Mammary epithelial cell (primary cell): ENCODE measurements at regions of chr16 and their contacts with region 1.

Region 1: DNA sequence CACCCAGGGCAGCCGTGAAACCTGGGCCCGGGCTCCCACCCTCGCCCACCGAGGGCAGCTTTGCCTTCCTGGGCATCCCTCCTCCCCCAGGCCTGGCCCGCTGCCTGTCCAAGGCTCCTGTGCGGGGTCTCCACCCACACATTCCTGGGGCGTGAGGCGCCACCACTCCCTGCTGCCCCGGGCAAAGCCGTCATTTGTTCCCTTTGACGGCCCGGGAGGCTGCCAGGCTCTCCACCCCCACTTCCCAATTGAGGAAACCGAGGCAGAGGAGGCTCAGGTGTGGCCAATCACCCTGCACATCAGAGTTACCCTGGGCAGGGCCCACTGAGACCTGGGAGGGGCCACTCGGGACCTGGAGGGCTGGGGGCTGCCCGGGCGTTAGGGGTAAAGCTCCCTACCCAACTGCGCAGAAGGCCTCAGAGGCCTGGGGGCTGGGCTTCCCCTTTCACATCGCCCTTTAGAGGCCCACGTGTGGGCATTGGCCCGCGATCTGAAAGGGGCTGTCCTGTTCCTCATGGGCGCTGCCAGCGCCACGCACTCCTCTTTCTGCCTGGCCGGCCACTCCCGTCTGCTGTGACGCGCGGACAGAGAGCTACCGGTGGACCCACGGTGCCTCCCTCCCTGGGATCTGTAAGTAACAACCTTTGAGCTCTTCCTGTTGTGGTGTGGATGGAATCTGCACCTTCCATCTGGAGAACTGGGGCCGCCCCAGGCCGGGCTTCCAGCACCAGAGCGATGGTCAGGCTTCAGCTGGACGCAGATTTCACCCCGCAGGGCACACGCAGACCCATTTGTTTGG is at the start of gene MSLN:
- DNase-seq: peak; percentile 47
- H3K4me3 ChIP-seq: no peak within 1 kb of the TSS
- H3K27ac ChIP-seq: peak within 1 kb of the TSS; percentile 13
- H3K4me1 ChIP-seq: peaks cover 22% of the 10 kb centered on the region
- H3K27me3 ChIP-seq: no peaks in the 10 kb centered on the region
- CTCF ChIP-seq: no peak
- total RNA-seq, gene MSLN: 1.4 to 17.8 TPM

Region 2: GRCh38 chr16:621528-622105 is 139.1 kb before region 1 on chr16:
- CTCF ChIA-PET with region 1: no interaction called
- dilution Hi-C with region 1: no loop called
- in situ Hi-C with region 1: no loop called
- intact Hi-C with region 1: no loop called
- DNase-seq: no peak
- H3K4me3 ChIP-seq: no peak overlapping the region
- H3K27ac ChIP-seq: no peak overlapping the region
- H3K4me1 ChIP-seq: peaks cover 26% of the 10 kb centered on the region
- H3K27me3 ChIP-seq: no peaks in the 10 kb centered on the region
- CTCF ChIP-seq: no peak

Region 3: DNA sequence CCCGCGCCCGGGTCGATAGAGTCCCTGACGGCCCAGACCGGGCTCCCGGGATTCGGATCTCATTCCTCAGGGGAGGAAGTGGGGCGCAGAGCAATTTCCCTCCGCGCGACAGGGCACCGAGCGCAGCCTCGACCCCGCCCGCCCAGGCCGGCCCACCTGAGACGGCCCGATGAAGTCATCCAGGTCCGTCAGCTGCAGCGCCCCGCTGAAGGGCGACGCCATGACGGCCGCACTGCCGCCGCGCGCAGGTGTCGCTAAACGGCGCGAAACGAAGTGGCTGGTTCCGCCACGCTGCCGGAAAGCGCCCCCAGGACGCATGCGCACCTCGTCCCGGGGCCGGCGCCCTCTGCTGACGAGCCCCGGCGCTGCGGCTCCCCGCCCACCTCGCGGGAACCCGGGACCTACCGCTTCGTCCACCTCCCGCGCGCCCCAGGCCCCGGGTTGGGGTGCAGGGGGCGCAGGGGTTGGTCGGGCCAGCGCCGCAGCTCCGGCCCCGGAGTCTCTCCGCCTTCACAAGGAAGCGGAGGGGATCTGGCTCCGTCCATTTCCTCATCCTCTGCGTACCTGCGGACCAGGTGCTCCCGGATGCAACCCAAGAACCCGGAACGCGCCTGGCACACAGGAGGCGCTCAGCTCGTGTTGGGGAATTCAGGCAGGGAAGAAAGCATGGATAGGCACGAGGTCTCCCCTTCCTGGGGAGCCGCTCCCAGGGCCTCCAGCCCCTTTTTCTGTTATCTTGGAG is 19.8 kb before region 1 on chr16 and contains the start of gene CIAO3:
- CTCF ChIA-PET with region 1: no interaction called
- dilution Hi-C with region 1: no loop called
- in situ Hi-C with region 1: no loop called
- intact Hi-C with region 1: loop called (anchors 1 kb)
- DNase-seq: peak; percentile 89
- H3K4me3 ChIP-seq: peak within 1 kb of the TSS; percentile 84 to 99 (median 95)
- H3K27ac ChIP-seq: peak within 1 kb of the TSS; percentile 62
- H3K4me1 ChIP-seq: peaks cover 8% of the 10 kb centered on the region
- H3K27me3 ChIP-seq: no peaks in the 10 kb centered on the region
- CTCF ChIP-seq: peak; percentile 61 to 81
- total RNA-seq, gene CIAO3: 28.7 to 28.8 TPM